ENCODE measurements at regions of chr9 and their contacts with region 1.

Region 1: DNA sequence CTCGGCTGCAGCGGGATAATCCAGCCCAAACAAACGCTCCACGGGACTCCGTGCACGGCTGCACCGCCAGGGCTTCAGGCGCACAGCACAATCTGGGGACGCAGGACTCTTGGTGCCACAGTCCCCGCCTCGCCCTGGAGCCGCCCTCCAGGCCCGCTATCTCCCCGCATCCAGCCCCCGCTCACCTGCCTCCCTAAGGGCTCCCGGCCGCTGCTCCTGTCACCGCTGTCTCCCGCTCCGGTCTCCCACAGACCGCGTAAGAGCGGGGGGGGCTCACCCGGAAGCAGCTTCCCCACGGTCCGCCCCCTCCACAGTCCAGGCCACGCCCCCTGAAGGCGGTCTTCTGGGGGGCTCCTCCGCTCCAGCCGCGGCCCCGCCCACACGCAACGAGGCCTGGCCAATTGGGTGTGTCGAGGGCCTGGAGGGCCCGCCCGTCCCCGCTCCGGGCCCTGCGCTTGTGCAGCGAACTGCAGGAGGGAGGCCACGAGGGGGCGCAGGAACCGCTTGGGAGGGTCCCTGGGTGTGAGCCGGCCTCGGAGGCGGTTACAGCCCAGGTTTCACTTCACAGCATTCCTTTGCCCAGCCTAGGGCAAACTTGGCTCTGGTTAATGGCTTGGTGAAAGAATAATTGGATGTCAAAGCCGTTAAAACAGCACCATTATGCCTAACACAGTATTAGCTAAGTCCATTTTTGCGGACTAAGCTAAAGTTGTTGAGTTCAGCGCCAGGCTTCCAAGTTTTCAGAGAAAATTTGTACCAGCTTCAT is at the start of gene ALAD:
- DNase-seq: peak; percentile 67
- ATAC-seq: peak; percentile 99
- H3K4me3 ChIP-seq: peak within 1 kb of the TSS; percentile 77
- H3K27ac ChIP-seq: peak within 1 kb of the TSS; percentile 88
- H3K4me1 ChIP-seq: no peaks in the 10 kb centered on the region
- H3K27me3 ChIP-seq: no peaks in the 10 kb centered on the region
- CTCF ChIP-seq: peak; percentile 93
- total RNA-seq, gene ALAD: 8.9 TPM

Region 2: DNA sequence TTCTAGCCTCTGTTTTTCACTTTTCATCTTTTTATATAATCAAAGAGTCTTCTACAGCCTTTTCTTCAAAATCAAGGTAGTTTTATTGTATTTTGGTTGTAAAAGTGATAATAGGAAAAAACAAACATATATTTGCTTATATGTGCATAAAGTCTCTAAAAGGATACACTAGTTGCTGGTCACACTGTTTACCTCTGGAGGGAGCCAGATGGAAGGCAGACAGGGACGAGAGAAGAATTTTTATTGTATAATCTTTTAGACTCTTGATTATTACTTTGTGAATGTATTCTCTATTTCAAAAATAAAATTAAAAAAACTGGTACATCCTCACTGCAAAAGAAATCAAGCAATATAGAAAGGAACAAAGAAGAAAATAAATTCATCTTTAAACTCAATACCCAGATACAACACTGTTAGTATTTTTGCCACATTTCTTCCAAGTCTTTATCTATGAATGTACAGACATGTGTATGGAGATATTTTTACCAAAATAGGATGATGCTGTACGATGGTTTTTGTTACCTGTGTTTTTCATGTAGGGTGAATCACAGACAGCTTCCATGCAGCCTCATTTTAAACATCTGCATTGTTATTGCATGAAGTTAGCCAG is 91.9 kb before region 1 on chr9:
- CTCF ChIA-PET with region 1: interaction called, 5 read pairs
- POLR2A ChIA-PET with region 1: no interaction called
- in situ Hi-C with region 1: no loop called
- intact Hi-C with region 1: loop called (anchors 2 kb)
- DNase-seq: no peak
- ATAC-seq: 0 out of 2 replicates have a peak, but pooled peaks have one; percentile 65
- H3K4me3 ChIP-seq: no peak overlapping the region
- H3K27ac ChIP-seq: no peak overlapping the region
- H3K4me1 ChIP-seq: no peaks in the 10 kb centered on the region
- H3K27me3 ChIP-seq: no peaks in the 10 kb centered on the region
- CTCF ChIP-seq: peak; percentile 65; the same call in 1 of the 2 replicates